ENCODE measurements at regions of chr4 and their contacts with region 1.

Region 1: GRCh38 chr4:81471588-81472288 is at the start of gene RASGEF1B:
- DNase-seq: peak; percentile 77
- H3K4me3 ChIP-seq: peak within 1 kb of the TSS; percentile 42 to 77 (median 66)
- H3K27ac ChIP-seq: no peak within 1 kb of the TSS
- H3K4me1 ChIP-seq: peaks cover 9% of the 10 kb centered on the region
- H3K27me3 ChIP-seq: peaks cover 22 to 26% of the 10 kb centered on the region in 2 experiments
- CTCF ChIP-seq: no peak
- POLR2A ChIP-seq: no peak
- total RNA-seq, gene RASGEF1B: not detected in 2 replicates

Region 2: GRCh38 chr4:81405894-81406401 is 65.8 kb before region 1 on chr4:
- CTCF ChIA-PET with region 1: no interaction called
- POLR2A ChIA-PET with region 1: no interaction called
- dilution Hi-C with region 1: no loop called
- intact Hi-C with region 1: loop called (anchors 1 kb)
- DNase-seq: peak; percentile 72
- H3K4me3 ChIP-seq: no peak overlapping the region
- H3K27ac ChIP-seq: no peak overlapping the region
- H3K4me1 ChIP-seq: no peaks in the 10 kb centered on the region
- H3K27me3 ChIP-seq: no peaks in the 10 kb centered on the region
- CTCF ChIP-seq: peak; percentile 32 to 33
- POLR2A ChIP-seq: no peak

Region 3: DNA sequence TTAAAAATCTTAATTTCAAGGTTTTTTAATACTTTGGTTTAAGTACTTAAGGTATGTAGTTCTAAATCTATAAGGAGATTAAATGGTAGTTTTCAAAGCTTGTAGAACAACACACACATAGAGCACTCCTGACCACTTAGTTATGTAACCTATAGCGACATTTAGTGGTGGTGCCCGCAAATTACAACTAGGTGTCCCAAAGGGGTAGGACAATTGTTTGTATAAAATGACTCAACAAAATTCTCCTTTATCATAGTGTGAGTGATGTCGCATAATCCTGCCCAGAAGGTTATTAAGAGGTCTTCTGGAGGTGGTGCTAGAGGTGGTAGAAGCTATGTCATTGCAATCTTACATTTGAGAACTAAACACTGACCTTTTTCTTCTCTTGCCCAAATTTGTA is 373.0 kb after region 1 on chr4:
- CTCF ChIA-PET with region 1: interaction called, 184 read pairs
- POLR2A ChIA-PET with region 1: no interaction called
- dilution Hi-C with region 1: no loop called
- intact Hi-C with region 1: loop called (anchors 1 kb)
- DNase-seq: peak; percentile 79
- H3K4me3 ChIP-seq: no peak overlapping the region
- H3K27ac ChIP-seq: no peak overlapping the region
- H3K4me1 ChIP-seq: no peaks in the 10 kb centered on the region
- H3K27me3 ChIP-seq: no peaks in the 10 kb centered on the region
- CTCF ChIP-seq: peak; percentile 55 to 57
- POLR2A ChIP-seq: no peak

Region 4: GRCh38 chr4:82268050-82268825 is 796.5 kb after region 1 on chr4:
- CTCF ChIA-PET with region 1: interaction called, 60 read pairs
- POLR2A ChIA-PET with region 1: no interaction called
- dilution Hi-C with region 1: no loop called
- intact Hi-C with region 1: loop called (anchors 1 kb)
- DNase-seq: peak; percentile 37
- H3K4me3 ChIP-seq: no peak overlapping the region
- H3K27ac ChIP-seq: no peak overlapping the region
- H3K4me1 ChIP-seq: no peaks in the 10 kb centered on the region
- H3K27me3 ChIP-seq: peaks cover 3% of the 10 kb centered on the region in 2 experiments
- CTCF ChIP-seq: peak; percentile 54 to 73
- POLR2A ChIP-seq: no peak

Region 5: DNA sequence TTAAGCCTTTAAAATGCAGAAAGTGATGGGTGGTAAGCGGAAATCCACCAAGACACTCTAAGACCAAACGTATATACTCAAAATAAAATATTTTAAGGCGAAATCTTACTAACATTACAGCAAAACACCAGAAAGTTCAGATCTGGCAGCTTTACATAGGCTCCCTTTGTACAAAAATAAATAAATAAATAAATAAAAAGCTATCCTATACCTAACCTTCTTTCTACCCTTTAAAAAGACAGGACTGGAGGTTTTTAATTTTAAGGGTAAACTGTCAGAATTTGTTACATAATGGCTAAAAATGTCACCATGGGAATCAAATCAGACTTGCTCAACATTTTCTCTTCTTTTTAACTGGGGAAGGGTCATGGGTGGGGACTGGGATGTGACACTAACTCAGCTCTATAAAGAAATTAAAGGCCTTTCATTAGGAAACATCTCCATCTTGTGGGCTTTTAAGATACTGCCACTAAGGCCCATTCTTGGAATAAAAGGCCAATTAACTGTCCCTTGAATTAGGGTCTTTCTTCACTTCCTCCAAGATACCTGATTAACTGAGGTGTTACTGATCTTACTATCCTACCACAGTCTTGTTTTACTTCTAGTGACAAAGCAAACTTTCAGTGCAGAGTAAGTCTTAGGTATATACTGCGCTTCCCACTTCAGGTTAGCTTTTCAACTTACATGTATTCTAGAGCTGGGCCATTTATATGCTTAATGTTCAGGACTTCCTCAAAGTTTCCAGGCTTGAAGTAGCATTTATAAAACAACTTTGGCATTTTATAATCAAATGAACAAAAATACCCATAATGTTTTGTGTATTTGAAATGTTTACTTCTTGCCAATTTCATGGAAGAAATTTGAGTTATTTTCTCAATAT is 888.8 kb after region 1 on chr4:
- CTCF ChIA-PET with region 1: interaction called, 26 read pairs
- POLR2A ChIA-PET with region 1: no interaction called
- dilution Hi-C with region 1: no loop called
- intact Hi-C with region 1: no loop called
- DNase-seq: peak; percentile 58
- H3K4me3 ChIP-seq: no peak overlapping the region
- H3K27ac ChIP-seq: no peak overlapping the region
- H3K4me1 ChIP-seq: no peaks in the 10 kb centered on the region
- H3K27me3 ChIP-seq: no peaks in the 10 kb centered on the region
- CTCF ChIP-seq: peak; percentile 37 to 44
- POLR2A ChIP-seq: no peak

Region 6: DNA sequence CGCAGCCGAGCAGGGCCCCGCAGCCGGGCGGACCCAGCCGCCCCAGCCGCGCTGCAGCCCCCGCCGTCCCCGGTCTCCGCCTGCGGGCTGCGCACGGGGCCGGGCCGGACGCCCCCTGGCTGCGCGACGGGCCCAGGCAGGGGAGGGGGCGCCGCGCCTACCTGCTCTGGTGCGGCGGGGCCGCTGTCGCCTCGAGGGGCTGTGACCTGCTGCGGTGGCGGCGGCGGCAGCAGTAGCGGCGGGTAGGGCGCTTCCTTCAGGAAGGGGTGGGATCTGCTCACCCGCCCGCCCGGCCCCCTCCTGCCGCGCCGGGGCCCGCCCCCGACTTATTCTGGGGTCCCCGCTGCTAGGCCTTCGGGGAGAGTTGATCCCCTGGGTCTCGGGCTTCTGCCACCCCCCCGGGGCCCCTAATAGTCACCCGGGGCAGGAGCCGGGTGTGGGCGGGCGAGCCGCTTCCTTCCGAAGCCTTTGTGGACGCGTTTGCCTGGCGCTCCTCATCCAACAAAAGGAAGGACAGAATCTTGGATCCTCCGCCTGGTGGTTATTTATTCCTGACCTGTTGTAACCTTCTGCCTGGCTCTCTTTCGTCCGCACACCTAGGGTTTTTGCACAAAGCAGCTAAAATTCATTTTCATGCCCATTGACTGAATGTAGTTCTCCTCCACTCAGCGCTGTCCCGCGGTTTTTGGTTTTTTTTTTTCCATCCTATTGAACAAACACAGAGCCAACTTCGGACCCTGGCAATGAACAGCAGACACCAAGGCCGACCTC is 1090.2 kb after region 1 on chr4 and contains the start of gene TMEM150C:
- CTCF ChIA-PET with region 1: no interaction called
- POLR2A ChIA-PET with region 1: no interaction called
- dilution Hi-C with region 1: no loop called
- intact Hi-C with region 1: no loop called
- DNase-seq: peak; percentile 26
- H3K4me3 ChIP-seq: peak within 1 kb of the TSS; percentile 58 to 81 (median 75)
- H3K27ac ChIP-seq: no peak within 1 kb of the TSS
- H3K4me1 ChIP-seq: peaks cover 4% of the 10 kb centered on the region
- H3K27me3 ChIP-seq: peaks cover 0 to 10% of the 10 kb centered on the region in 2 experiments
- CTCF ChIP-seq: no peak
- POLR2A ChIP-seq: no peak
- total RNA-seq, gene TMEM150C: 6.5 and 6.6 TPM in 2 replicates